PC-3 (cell line): ENCODE measurements at regions of chr4 and their contacts with region 1.

Region 1: GRCh38 chr4:26860157-26860921 is at the start of gene STIM2:
- DNase-seq: peak; percentile 95
- ATAC-seq: peak; percentile 60
- H3K4me3 ChIP-seq: peak within 1 kb of the TSS; percentile 80
- H3K27ac ChIP-seq: peak within 1 kb of the TSS; percentile 67
- H3K4me1 ChIP-seq: peaks cover 17% of the 10 kb centered on the region
- H3K27me3 ChIP-seq: no peaks in the 10 kb centered on the region
- CTCF ChIP-seq: no peak
- total RNA-seq, gene STIM2: 15.5 and 16.9 TPM in 2 replicates

Region 2: DNA sequence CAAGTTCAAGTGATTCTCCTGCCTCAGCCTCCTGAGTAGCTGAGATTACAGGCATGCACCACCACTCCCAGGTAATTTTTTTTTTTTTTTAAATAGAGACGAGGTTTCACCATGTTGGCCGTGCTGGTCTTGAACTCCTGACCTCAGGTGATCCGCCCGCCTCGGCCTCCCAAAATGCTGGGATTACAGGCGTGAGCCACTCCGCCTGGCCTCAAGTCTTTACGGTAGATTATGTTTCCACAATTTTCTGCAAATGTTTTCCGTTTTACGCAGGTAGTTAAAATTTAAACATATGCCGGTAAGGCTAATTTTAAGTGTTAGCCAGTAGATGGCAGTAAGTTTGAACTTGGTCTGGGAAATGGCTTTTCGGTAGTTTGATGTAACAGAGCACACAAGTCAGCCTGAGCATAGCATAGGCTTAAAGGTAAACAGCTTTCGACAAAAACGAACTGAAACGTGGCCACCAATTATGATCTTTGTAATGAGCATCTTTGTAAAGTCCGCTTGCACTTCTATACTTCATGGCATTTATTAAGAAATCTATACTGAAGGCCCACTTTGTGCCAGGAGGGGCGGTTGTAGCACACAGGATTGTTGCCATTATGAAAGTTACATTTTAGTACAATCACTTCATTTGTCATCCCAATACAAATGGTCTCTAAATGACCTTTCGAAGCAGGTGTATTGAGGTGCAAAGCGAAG is 401.1 kb before region 1 on chr4:
- CTCF ChIA-PET with region 1: no interaction called
- POLR2A ChIA-PET with region 1: no interaction called
- intact Hi-C with region 1: loop called (anchors 5 kb)
- DNase-seq: peak; percentile 65
- ATAC-seq: peak; percentile 67
- H3K4me3 ChIP-seq: peak overlapping the region; percentile 55; the same call in 1 of the 2 replicates
- H3K27ac ChIP-seq: no peak overlapping the region
- H3K4me1 ChIP-seq: no peaks in the 10 kb centered on the region; the same call in 1 of the 2 replicates
- H3K27me3 ChIP-seq: no peaks in the 10 kb centered on the region
- CTCF ChIP-seq: peak; percentile 68

Region 3: GRCh38 chr4:26719954-26720552 is 140.3 kb before region 1 on chr4:
- CTCF ChIA-PET with region 1: no interaction called
- POLR2A ChIA-PET with region 1: no interaction called
- intact Hi-C with region 1: loop called (anchors 10 kb)
- DNase-seq: peak; percentile 44
- ATAC-seq: peak; percentile 27; the same call in 1 of the 2 replicates
- H3K4me3 ChIP-seq: no peak overlapping the region
- H3K27ac ChIP-seq: no peak overlapping the region
- H3K4me1 ChIP-seq: peaks cover 9% of the 10 kb centered on the region
- H3K27me3 ChIP-seq: no peaks in the 10 kb centered on the region
- CTCF ChIP-seq: peak; percentile 72

Region 4: DNA sequence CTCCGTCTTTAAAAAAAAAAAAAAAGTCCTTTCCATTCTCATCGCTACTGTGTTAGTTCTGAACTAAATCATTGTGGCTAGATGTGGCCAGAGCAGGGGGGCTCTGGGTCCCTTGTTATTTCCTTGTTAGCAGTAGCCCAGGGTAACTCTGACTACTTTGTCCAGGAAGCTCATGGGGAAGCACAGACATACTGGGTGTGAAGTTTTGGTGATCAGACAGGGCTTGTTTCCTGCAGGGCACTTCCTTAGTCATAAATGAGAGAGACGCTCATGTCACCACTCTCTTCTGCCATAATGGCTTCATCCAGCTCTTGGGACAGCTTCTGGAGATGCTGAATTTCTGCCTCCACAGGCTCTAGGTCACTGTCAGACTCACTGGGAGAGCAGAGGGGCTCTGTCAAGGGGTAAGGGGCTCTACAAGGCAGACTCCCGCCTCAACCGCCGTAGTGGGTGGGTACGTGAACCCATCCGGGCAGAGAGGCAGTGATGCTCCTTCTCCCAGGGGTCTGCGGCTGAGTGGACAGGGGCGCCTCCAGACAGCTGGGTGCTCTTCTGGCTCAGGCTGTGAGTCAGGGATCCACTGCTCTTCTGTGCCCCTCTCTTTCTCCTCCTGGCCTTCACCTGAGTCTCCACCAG is 13.2 kb after region 1 on chr4:
- CTCF ChIA-PET with region 1: no interaction called
- POLR2A ChIA-PET with region 1: no interaction called
- intact Hi-C with region 1: no loop called
- DNase-seq: no peak
- ATAC-seq: no peak
- H3K4me3 ChIP-seq: no peak overlapping the region
- H3K27ac ChIP-seq: no peak overlapping the region
- H3K4me1 ChIP-seq: 0 out of 2 replicates have a peak, but pooled peaks cover under 1% of the 10 kb centered on the region
- H3K27me3 ChIP-seq: no peaks in the 10 kb centered on the region
- CTCF ChIP-seq: no peak

Region 5: GRCh38 chr4:26896636-26897035 is 36.3 kb after region 1 on chr4:
- CTCF ChIA-PET with region 1: no interaction called
- POLR2A ChIA-PET with region 1: no interaction called
- intact Hi-C with region 1: no loop called
- DNase-seq: no peak
- ATAC-seq: no peak
- H3K4me3 ChIP-seq: no peak overlapping the region
- H3K27ac ChIP-seq: no peak overlapping the region
- H3K4me1 ChIP-seq: no peaks in the 10 kb centered on the region
- H3K27me3 ChIP-seq: no peaks in the 10 kb centered on the region
- CTCF ChIP-seq: no peak

Region 6: DNA sequence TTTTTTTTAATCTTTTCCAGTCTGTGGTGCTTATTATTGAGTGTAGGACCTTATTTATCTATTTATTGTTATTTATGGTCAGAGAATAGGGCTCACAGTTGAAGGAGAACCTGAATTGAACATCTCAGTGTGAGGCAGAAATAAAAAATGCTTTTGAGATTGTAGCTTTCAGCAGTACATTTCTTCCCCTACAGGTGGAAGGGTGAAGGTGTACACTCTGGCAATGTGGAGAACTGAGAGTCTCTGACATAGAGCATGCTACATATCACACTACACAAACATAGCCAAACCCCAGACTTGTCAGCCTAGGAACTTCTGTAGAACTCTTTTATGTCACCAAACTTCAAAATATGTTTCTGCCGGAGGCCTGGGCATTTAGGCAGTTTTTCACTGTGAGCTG is 140.5 kb after region 1 on chr4:
- CTCF ChIA-PET with region 1: no interaction called
- POLR2A ChIA-PET with region 1: interaction called, 4 read pairs
- intact Hi-C with region 1: loop called (anchors 1 kb)
- DNase-seq: peak; percentile 32
- ATAC-seq: peak; percentile 58
- H3K4me3 ChIP-seq: no peak overlapping the region
- H3K27ac ChIP-seq: no peak overlapping the region
- H3K4me1 ChIP-seq: peaks cover 30% of the 10 kb centered on the region
- H3K27me3 ChIP-seq: no peaks in the 10 kb centered on the region
- CTCF ChIP-seq: peak; percentile 46

Region 7: GRCh38 chr4:27484216-27484615 is 623.9 kb after region 1 on chr4:
- CTCF ChIA-PET with region 1: no interaction called
- POLR2A ChIA-PET with region 1: interaction called, 25 read pairs
- intact Hi-C with region 1: no loop called
- DNase-seq: no peak
- ATAC-seq: no peak
- H3K4me3 ChIP-seq: no peak overlapping the region
- H3K27ac ChIP-seq: no peak overlapping the region
- H3K4me1 ChIP-seq: no peaks in the 10 kb centered on the region
- H3K27me3 ChIP-seq: no peaks in the 10 kb centered on the region
- CTCF ChIP-seq: no peak